MCF 10A (cell line): ENCODE measurements at regions of chr6 and their contacts with region 1.

Region 1: DNA sequence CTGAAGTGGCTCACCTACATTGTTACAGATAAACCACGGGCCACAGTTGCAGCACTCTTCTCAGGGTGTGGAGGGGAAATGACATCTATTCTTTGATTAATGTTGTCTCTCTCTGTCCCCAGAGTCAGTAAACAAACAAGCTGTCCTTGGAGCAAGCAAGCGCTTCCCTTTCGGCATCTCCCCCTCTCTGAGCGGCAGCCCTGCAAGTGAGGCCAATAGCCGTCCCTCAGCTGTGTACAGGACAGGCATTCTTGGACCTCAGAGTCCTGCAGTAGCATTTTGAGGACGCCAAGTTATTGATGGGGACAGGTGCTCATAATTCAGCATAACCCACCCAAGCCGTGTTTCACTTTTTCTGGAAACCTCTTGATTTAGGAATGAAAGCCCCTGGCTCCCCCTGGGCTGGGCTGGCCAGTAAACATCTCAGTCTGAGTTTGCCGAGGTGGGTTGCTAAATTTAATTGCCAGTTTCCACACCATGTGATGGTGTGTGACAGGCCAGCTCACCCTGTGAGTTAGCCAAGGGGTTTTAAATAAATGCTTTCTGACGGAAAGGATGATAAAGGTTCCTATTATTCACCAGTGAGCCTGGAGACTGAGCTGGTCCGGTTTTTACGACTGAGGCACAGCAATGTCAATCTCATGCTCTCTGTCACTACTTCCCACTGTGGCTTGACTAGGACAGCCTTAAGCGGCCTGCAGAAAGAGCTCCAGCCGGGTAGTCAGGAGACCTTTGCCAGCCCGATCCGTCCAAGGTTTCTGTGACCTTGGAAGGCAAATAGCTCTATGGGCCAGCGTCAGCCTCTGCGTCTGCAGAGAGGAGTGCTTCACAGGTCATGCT is 214.8 kb upstream of the RREB1 start:
- DNase-seq: no peak
- H3K4me3 Mint-ChIP-seq: no peak overlapping the region
- H3K27ac Mint-ChIP-seq: no peak overlapping the region
- H3K4me1 Mint-ChIP-seq: peaks cover 13% of the 10 kb centered on the region
- H3K27me3 Mint-ChIP-seq: no peaks in the 10 kb centered on the region
- CTCF ChIP-seq: no peak

Region 2: DNA sequence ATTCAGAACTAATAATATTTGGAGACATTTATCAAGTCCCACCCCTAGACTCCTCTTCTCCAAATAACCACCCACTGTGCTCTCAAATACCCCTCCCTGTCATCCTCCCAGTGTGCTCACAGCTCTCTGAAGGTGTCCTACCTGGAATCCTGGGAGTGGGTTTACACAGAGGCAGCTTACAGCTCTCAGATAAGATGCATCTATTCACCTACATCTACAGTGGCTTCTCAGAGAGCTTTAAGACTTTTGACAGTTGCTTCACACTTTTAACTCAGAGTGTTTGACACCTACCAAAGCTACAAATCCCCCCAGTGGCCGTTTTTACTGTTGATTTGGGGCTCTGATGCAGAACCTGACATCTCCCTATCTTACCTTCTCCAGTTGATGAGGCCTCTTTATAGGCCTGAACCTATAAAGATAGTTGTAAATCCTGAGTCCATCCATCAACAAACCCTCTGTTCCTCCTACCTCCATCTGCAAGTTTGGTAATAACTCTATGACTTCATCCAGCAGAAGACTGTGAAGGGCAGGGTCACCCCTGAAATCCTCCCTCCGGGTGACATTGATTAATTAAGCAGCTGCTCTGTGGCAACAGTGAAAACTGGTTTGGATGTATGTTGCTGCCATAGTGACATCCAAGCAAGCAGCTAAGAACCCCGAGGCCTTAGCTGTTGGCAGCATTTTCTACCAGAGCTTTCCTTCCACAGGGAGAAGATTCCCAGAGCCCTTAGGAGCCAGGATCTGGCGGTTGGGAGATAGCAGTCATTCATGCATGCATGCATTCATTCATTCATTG is 11.3 kb before region 1 on chr6:
- CTCF ChIA-PET with region 1: interaction called, 3 read pairs
- POLR2A ChIA-PET with region 1: interaction called, 10 read pairs
- intact Hi-C with region 1: no loop called
- DNase-seq: no peak
- H3K4me3 Mint-ChIP-seq: no peak overlapping the region
- H3K27ac Mint-ChIP-seq: no peak overlapping the region
- H3K4me1 Mint-ChIP-seq: peaks cover 23% of the 10 kb centered on the region
- H3K27me3 Mint-ChIP-seq: no peaks in the 10 kb centered on the region
- CTCF ChIP-seq: no peak